H1 (cell line): ENCODE measurements at regions of chr1 and their contacts with region 1.

Region 1: GRCh38 chr1:205335643-205336091 is 14.1 kb upstream of the NUAK2 start:
- DNase-seq: peak; percentile 78 to 91
- H3K4me3 ChIP-seq: no peak overlapping the region
- H3K27ac ChIP-seq: no peak overlapping the region
- H3K4me1 ChIP-seq: peaks cover 0 to 3% (median under 1%) of the 10 kb centered on the region in 4 experiments; a peak in 4 of 7 replicates
- H3K27me3 ChIP-seq: no peaks in the 10 kb centered on the region; a peak in 3 of 7 replicates
- CTCF ChIP-seq: peak; percentile 93 to 99 (median 94)
- EP300 ChIP-seq: no peak
- POLR2A ChIP-seq: no peak
- RAD21 ChIP-seq: peak; percentile 78 to 89

Region 2: GRCh38 chr1:205391386-205391785 is 55.7 kb after region 1 on chr1:
- CTCF ChIA-PET with region 1: interaction called, 23 read pairs
- POLR2A ChIA-PET with region 1: no interaction called
- DNase-seq: no peak
- H3K4me3 ChIP-seq: no peak overlapping the region
- H3K27ac ChIP-seq: no peak overlapping the region
- H3K4me1 ChIP-seq: no peaks in the 10 kb centered on the region
- H3K27me3 ChIP-seq: no peaks in the 10 kb centered on the region
- CTCF ChIP-seq: no peak
- EP300 ChIP-seq: no peak
- POLR2A ChIP-seq: no peak
- RAD21 ChIP-seq: no peak

Region 3: DNA sequence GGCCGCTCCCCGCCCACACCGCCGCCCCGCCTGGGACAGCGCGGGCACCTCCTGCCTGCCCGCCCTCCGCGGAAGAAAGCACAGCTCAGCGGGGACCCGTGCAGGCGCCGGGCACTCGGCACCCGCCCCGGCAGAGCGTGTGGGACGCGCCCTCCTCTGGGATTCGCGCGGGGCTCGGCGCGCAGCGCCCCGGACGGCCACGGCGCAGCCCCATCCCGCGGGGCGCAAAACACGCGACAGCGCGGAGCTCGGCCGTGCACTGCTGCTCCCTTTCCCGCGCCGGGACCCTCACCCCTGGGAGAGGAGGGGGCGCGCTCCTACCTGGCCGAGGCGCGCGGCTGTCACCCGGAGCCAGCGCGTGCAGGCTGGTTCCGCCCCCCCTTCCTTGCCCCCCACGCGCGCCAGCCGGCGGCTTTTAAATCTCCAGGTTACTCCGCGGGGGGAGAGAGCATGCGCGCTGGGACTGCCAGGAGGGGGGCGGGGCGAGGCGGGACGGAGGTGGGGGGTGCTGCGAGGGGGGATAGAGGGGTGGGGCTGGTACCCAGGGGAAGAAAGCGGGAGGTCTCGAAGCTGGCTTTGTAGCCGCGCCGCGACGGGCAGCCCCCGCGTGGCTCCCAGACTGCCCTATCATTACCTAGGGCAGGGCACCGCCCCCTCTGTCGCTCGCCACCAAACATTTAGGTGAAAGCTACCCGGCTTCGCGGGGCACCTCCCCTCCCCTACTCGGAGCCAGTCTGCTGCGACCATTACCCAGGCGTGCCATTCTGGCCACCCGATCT is 344.6 kb after region 1 on chr1 and contains the start of gene SLC45A3:
- CTCF ChIA-PET with region 1: no interaction called
- POLR2A ChIA-PET with region 1: no interaction called
- DNase-seq: no peak
- H3K4me3 ChIP-seq: peak within 1 kb of the TSS; percentile 63 to 93 (median 72)
- H3K27ac ChIP-seq: peak within 1 kb of the TSS; percentile 48; the same call in 1 of the 2 replicates
- H3K4me1 ChIP-seq: peaks cover 4 to 30% (median 15%) of the 10 kb centered on the region in 4 experiments
- H3K27me3 ChIP-seq: peaks cover 0 to 11% (median 2%) of the 10 kb centered on the region in 4 experiments; a peak in 2 of 7 replicates
- CTCF ChIP-seq: no peak
- EP300 ChIP-seq: no peak
- POLR2A ChIP-seq: peak in 1 of 2 experiments; percentile 31; a peak in 1 of 3 replicates
- RAD21 ChIP-seq: no peak
- total RNA-seq, gene SLC45A3: 12.5 and 13.0 TPM in 2 replicates